Activated CD4-positive, alpha-beta memory T cell treated with anti-CD3 and anti-CD28 coated beads, Interleukin-2, amount 10 ng/mL, durations not matched to agents 7 days and 5 days (primary cell): ENCODE measurements at regions of chr16 and their contacts with region 1.

Region 1: DNA sequence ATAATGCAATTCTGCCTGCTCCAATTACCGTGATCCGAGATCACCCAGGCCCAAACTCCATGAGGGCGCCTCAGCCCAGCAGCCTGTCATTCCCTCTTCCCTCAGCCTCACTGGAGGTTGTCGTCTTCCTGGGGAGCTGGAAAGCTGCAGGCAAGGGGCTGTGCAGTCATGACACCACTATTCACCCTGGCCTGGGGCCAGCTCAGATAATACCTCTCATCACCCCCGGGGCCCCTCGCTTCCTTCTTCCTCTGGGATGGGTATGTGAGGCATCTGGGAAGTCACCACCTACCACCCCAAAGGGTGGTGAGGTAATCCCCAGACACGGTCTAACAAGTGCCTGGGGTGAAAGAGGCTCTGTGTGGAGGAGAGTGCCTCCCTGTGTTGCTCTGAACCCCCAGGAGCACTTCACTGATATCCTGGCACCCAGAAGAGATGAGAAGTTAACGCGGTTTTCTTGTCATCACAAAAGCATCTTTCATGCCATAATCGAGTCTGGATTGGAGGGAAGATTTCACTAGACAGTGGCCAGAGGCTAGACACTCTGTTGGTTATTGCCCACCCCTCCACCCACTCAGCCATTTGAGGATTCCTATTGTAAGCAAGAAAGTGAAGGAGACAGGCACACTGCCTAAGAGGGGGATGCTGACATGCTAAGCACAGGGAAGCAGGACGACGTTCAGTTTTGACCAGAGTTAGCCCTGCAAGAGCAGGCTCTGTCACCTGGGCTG is 18.4 kb downstream of the CFAP20 start:
- DNase-seq: no peak
- H3K4me3 Mint-ChIP-seq: no peak overlapping the region
- H3K27ac Mint-ChIP-seq: no peak overlapping the region
- H3K4me1 Mint-ChIP-seq: peaks cover 2% of the 10 kb centered on the region
- H3K27me3 Mint-ChIP-seq: no peaks in the 10 kb centered on the region

Region 2: GRCh38 chr16:58098207-58099096 is 12.3 kb before region 1 on chr16:
- CTCF ChIA-PET with region 1: interaction called, 14 read pairs
- POLR2A ChIA-PET with region 1: no interaction called
- DNase-seq: no peak
- H3K4me3 Mint-ChIP-seq: no peak overlapping the region
- H3K27ac Mint-ChIP-seq: no peak overlapping the region
- H3K4me1 Mint-ChIP-seq: peaks cover 9% of the 10 kb centered on the region
- H3K27me3 Mint-ChIP-seq: no peaks in the 10 kb centered on the region